ENCODE measurements at regions of chr14 and their contacts with region 1.

Region 1: DNA sequence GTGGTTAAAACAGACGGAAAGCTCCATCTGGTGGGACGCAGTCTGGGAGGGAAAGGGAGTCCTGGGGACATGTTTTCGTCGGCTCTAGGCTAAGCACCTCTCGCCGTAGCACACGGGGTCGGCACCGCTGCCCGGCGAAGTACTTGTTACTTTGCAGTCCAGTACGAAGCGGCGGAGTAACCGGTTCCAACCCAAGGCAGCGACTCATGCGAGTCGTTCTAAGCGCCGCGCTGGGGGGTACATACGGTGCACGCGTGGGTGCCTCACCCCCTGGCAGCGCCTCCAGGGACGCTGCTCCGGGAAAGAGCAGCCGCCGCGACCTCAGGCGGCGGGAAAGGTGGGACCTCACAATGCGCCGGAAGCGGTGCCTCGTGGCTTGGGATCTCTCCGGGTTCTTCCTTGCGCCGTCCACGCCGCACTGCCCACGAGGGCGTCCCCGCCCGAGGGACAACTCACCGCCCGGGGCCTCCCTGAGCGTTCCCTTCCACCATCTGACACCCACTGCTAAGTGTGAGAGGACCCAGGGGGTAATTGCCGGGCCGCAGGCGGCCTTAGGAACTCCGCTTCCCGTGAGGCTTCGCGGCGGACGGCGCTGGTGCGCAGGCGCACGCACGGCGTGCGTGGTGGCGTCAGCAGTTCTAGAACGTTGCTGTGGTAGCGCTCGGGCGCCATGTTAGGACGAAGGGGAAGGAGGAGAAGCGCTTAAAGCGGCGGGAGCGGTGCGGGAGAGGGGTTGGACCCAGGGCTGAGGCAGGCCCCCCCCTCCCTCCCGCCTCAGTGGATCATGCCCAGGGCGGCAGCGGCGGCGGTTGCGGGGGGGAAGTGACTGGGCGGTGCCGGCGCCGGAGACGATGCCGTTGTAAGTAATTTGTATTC is at the start of gene PAPOLA:
- DNase-seq: peak; percentile 95
- H3K4me3 Mint-ChIP-seq: peak within 1 kb of the TSS; percentile 89
- H3K27ac Mint-ChIP-seq: peak within 1 kb of the TSS; percentile 93
- H3K4me1 Mint-ChIP-seq: peaks cover 34% of the 10 kb centered on the region
- H3K27me3 Mint-ChIP-seq: no peaks in the 10 kb centered on the region
- total RNA-seq, gene PAPOLA: 162 to 181 TPM

Region 2: DNA sequence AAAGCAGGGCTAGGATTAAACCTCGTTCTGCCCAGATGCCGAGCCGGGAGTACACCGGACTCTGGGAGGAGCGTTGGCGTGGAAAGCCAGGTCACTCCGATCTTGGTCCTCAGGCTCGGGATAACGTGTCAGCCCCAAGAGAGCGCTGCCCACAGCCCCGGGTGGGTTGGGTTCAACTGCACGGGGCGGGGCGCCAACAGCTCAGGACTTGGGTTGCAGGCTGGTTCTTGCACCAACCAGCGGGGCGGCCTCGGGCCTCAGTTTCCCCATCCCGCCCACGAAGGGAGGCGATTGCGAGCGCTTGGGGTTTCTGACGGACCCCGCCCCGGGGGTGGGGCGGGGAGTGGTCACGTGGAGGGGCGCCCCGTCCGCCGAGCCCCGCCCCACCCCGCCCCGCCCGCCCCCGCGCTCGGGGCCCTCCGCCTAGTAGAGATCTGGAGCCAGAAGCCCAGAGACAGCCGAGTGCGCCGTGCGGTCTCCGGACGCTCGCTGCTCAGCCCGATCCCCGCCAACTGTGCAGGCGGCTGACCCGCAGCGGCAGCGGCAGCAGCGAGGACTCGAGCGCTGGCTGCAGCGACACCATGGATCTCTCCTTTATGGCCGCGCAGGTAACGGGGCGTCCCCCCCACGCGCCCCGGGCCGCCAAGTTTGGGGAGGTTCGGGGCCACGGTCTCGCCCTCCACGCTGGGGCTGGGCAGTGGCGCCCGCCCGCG is 462.9 kb before region 1 on chr14 and contains the start of gene C14orf132:
- CTCF ChIA-PET with region 1: no interaction called
- intact Hi-C with region 1: loop called (anchors 5 kb)
- DNase-seq: peak; percentile 70
- H3K4me3 Mint-ChIP-seq: peak within 1 kb of the TSS; percentile 80
- H3K27ac Mint-ChIP-seq: no peak within 1 kb of the TSS
- H3K4me1 Mint-ChIP-seq: peaks cover 16% of the 10 kb centered on the region
- H3K27me3 Mint-ChIP-seq: peaks cover 11% of the 10 kb centered on the region
- total RNA-seq, gene C14orf132: 3.2 to 4.9 TPM

Region 3: GRCh38 chr14:96538097-96538989 is 36.4 kb after region 1 on chr14:
- CTCF ChIA-PET with region 1: no interaction called
- intact Hi-C with region 1: loop called (anchors 5 kb)
- DNase-seq: no peak
- H3K4me3 Mint-ChIP-seq: no peak overlapping the region
- H3K27ac Mint-ChIP-seq: peak overlapping the region; percentile 56
- H3K4me1 Mint-ChIP-seq: peaks cover 17% of the 10 kb centered on the region
- H3K27me3 Mint-ChIP-seq: no peaks in the 10 kb centered on the region

Region 4: GRCh38 chr14:96796851-96797581 is 295.0 kb after region 1 on chr14 and contains the start of gene VRK1:
- CTCF ChIA-PET with region 1: no interaction called
- intact Hi-C with region 1: loop called (anchors 1 kb)
- DNase-seq: peak; percentile 96
- H3K4me3 Mint-ChIP-seq: peak within 1 kb of the TSS; percentile 92
- H3K27ac Mint-ChIP-seq: peak within 1 kb of the TSS; percentile 84
- H3K4me1 Mint-ChIP-seq: peaks cover 20% of the 10 kb centered on the region
- H3K27me3 Mint-ChIP-seq: no peaks in the 10 kb centered on the region
- total RNA-seq, gene VRK1: 64.9 to 74.3 TPM